Common myeloid progenitor, CD34-positive (primary cell): ENCODE measurements at regions of chr6 and their contacts with region 1.

Region 1: DNA sequence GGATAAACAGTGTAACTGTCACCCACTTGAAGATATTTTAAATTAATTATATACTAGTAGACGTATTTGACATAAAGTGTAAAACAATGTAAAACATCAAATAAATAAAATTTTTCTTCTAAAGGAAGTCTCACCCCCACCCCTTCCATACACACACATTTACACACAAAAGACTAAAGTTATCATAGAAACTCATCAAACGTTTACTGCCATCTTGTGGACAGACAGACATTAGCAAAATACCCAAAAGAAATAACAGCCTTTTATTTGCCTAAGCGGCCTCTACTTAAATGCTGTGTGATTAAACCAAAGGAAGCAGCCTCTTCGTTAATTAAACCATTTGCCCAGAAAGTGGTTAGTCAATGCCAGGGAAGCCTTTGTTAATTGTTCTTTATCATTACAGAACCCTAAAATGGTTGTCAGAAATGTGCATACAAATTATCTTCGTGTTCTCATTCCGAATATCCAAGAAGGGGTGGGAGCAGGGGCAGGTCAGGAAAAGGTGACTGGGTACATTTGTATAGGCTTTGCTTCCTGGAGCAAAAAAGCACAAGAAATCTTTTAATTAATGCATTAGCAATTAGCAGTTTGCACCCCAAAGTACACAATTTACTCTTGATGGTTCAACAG is 176.2 kb upstream of the SASH1 start:
- DNase-seq: peak; percentile 48 to 77 (median 75)
- H3K4me3 ChIP-seq: no peak overlapping the region
- H3K27ac ChIP-seq: no peak overlapping the region
- H3K4me1 ChIP-seq: no peaks in the 10 kb centered on the region
- H3K27me3 ChIP-seq: peaks cover 0 to 21% (median 10%) of the 10 kb centered on the region in 5 experiments

Region 2: GRCh38 chr6:147506704-147507114 is 659.7 kb before region 1 on chr6:
- CTCF ChIA-PET with region 1: interaction called, 19 read pairs
- POLR2A ChIA-PET with region 1: no interaction called
- DNase-seq: peak; percentile 42 to 63 (median 54)
- H3K4me3 ChIP-seq: peak overlapping the region in 2 of 7 experiments; percentile 9 to 25
- H3K27ac ChIP-seq: no peak overlapping the region
- H3K4me1 ChIP-seq: peaks cover 0 to 28% (median 24%) of the 10 kb centered on the region in 4 experiments
- H3K27me3 ChIP-seq: peaks cover 15 to 87% (median 53%) of the 10 kb centered on the region in 5 experiments

Region 3: DNA sequence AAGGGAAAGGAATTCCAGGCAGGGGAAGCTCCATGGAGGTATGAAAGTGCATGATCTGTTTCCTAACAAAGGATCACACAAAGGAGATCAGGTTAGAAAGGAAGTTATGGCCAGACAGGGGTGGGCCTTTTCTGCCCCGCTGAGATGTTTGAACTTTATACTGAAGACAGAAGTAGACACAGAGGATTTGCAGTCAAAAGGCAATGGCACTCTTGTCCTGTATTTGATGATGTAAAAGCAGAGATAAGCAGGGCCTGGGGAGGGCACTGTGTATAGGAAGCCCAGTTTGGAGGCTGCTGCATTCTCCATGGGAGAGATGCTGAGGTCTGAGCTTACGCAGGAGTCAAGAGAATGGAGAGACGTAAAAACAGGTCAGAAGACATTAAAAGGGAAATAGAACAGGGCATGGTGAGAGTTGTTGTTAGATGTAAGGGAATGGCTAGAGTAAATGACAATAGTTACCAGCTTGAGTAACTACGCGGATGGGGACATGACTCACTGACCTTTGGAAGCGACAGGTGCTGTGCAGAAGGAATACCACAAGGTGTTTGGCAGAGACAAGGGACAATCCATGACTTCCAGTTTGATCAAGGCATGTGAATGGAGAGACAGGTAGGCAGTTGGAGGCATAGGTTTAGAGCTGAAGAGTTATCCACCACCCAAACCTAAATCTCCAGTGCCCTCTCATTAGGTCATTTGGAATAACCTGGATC is 14.4 kb before region 1 on chr6:
- CTCF ChIA-PET with region 1: interaction called, 10 read pairs
- POLR2A ChIA-PET with region 1: no interaction called
- DNase-seq: no peak
- H3K4me3 ChIP-seq: no peak overlapping the region
- H3K27ac ChIP-seq: no peak overlapping the region
- H3K4me1 ChIP-seq: no peaks in the 10 kb centered on the region
- H3K27me3 ChIP-seq: peaks cover 0 to 28% (median 9%) of the 10 kb centered on the region in 5 experiments

Region 4: GRCh38 chr6:148177589-148178233 is 11.3 kb after region 1 on chr6:
- CTCF ChIA-PET with region 1: interaction called, 10 read pairs
- POLR2A ChIA-PET with region 1: no interaction called
- DNase-seq: peak; percentile 14 to 44 (median 18)
- H3K4me3 ChIP-seq: no peak overlapping the region
- H3K27ac ChIP-seq: no peak overlapping the region
- H3K4me1 ChIP-seq: no peaks in the 10 kb centered on the region
- H3K27me3 ChIP-seq: peaks cover 3 to 36% (median 18%) of the 10 kb centered on the region in 5 experiments

Region 5: GRCh38 chr6:148329596-148330381 is 163.3 kb after region 1 on chr6:
- CTCF ChIA-PET with region 1: no interaction called
- POLR2A ChIA-PET with region 1: no interaction called
- DNase-seq: no peak
- H3K4me3 ChIP-seq: no peak overlapping the region
- H3K27ac ChIP-seq: no peak overlapping the region
- H3K4me1 ChIP-seq: peaks cover 0 to 4% (median 0%) of the 10 kb centered on the region in 4 experiments
- H3K27me3 ChIP-seq: peaks cover 2 to 40% (median 4%) of the 10 kb centered on the region in 5 experiments